ENCODE measurements at regions of chr3 and their contacts with region 1.

Region 1: GRCh38 chr3:196883361-196883760 is 15.6 kb downstream of the SENP5 start:
- DNase-seq: no peak
- H3K4me3 ChIP-seq: no peak overlapping the region
- H3K27ac ChIP-seq: no peak overlapping the region
- H3K4me1 ChIP-seq: peaks cover 4% of the 10 kb centered on the region
- CTCF ChIP-seq: no peak

Region 2: GRCh38 chr3:196867507-196868296 is 15.7 kb before region 1 on chr3 and contains the start of gene SENP5:
- CTCF ChIA-PET with region 1: interaction called, 5 read pairs
- POLR2A ChIA-PET with region 1: interaction called, 13 read pairs
- intact Hi-C with region 1: no loop called
- DNase-seq: peak; percentile 92
- H3K4me3 ChIP-seq: peak within 1 kb of the TSS; percentile 77
- H3K27ac ChIP-seq: peak within 1 kb of the TSS; percentile 50
- H3K4me1 ChIP-seq: peaks cover 17% of the 10 kb centered on the region
- CTCF ChIP-seq: no peak
- total RNA-seq, gene SENP5: 39.4 and 40.2 TPM in 2 replicates